ENCODE measurements at regions of chr12 and their contacts with region 1.

Region 1: GRCh38 chr12:106112145-106112821 is 26.5 kb downstream of the NUAK1 start:
- DNase-seq: no peak
- H3K4me3 ChIP-seq: no peak overlapping the region
- H3K27ac ChIP-seq: no peak overlapping the region
- H3K27me3 ChIP-seq: no peaks in the 10 kb centered on the region
- CTCF ChIP-seq: no peak

Region 2: DNA sequence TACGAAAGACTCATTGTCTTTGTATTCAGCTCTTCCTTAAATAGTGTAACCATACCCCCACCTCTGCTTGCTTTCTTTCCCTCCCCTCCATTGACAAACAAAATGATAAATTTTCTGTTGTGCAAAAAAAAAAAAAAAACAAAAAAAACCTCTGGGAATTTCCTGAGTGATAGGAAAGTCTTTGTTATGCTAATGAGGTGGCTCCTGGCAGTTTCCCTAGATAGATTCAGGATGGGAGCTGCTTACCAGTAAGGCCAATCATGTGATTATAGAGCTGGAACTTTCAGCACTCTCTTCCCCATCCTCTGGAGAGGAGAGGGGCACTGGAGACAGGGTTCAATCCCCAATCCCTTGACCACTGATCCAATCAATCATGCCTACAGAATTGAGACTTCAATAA is 94.0 kb before region 1 on chr12:
- CTCF ChIA-PET with region 1: interaction called, 5 read pairs
- POLR2A ChIA-PET with region 1: interaction called, 10 read pairs
- DNase-seq: no peak
- H3K4me3 ChIP-seq: no peak overlapping the region
- H3K27ac ChIP-seq: no peak overlapping the region
- H3K27me3 ChIP-seq: no peaks in the 10 kb centered on the region
- CTCF ChIP-seq: no peak